ENCODE measurements at regions of chr19 and their contacts with region 1.

Region 1: GRCh38 chr19:1383311-1384084 is at the start of gene NDUFS7:
- DNase-seq: peak; percentile 89
- H3K4me3 ChIP-seq: peak within 1 kb of the TSS; percentile 69 to 84 (median 73)
- H3K27ac ChIP-seq: peak within 1 kb of the TSS; percentile 18
- H3K4me1 ChIP-seq: peaks cover 7% of the 10 kb centered on the region
- H3K27me3 ChIP-seq: no peaks in the 10 kb centered on the region
- CTCF ChIP-seq: peak in 1 of 2 donors; percentile 21
- POLR2A ChIP-seq: no peak
- total RNA-seq, gene NDUFS7: 95.8 and 101 TPM in 2 replicates

Region 2: DNA sequence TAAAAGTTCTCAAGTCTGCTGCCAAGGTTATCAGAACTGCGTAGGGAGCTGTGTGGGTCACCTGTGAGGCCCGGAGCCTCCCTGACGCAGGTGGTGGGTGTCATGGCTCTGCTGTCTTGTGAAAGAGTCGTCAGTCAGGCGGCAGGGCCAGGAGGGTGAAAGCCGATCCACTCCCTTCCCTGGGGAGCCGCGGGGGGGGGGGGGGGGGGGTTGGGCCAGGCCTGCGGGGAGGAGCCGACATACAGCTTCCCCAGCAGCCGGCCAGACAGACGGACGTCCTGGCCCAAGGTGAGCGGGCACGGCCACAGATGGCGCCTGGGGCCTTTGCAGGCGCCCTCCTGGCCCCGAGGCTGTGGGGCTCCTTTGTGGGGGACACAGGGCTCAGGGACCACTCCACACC is 221.8 kb before region 1 on chr19:
- CTCF ChIA-PET with region 1: no interaction called
- POLR2A ChIA-PET with region 1: no interaction called
- dilution Hi-C with region 1: no loop called
- intact Hi-C with region 1: no loop called
- DNase-seq: no peak
- H3K4me3 ChIP-seq: no peak overlapping the region
- H3K27ac ChIP-seq: no peak overlapping the region
- H3K4me1 ChIP-seq: no peaks in the 10 kb centered on the region
- H3K27me3 ChIP-seq: no peaks in the 10 kb centered on the region
- CTCF ChIP-seq: no peak
- POLR2A ChIP-seq: no peak

Region 3: DNA sequence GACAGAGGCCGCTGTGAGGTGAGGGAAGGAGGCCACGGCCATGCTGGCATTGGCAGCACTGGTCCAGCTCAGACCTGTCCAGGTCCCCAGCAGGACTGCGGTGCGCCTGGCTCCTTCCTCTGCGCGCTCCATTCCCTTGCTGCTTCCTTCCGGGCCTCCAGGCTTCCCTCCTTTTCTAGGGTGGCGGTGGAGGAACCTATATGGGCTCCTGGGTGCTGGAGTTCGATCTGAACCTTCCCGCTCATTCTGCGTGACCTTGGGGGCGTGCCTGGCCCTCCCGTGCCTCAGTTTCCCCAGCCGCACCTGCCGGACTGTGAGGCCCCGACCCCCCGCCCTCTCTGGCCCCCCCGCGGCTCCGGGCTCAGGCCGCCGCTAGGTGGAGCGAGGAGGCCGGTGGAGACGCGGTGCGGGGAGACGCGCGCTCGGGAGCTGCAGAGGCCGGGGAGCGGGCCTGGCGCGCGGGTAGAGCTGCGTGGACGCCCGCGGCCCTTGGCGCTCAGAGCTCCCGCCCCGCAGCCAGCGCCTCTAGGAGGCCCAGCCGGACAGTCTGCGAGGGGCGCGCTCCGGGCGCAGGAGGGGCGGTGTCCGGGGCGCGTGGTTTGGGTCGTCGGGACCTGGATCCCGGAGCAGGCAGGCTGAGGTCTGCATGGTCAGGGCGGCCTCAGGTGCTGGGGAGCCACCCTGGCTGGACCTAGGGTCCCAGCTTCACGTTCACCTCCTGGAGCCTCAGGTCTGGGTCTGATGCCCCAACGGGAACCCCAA is 67.8 kb before region 1 on chr19:
- CTCF ChIA-PET with region 1: interaction called, 6 read pairs
- POLR2A ChIA-PET with region 1: no interaction called
- dilution Hi-C with region 1: no loop called
- intact Hi-C with region 1: loop called (anchors 5 kb)
- DNase-seq: peak; percentile 31
- H3K4me3 ChIP-seq: no peak overlapping the region
- H3K27ac ChIP-seq: no peak overlapping the region
- H3K4me1 ChIP-seq: peaks cover 13% of the 10 kb centered on the region
- H3K27me3 ChIP-seq: peaks cover 17 to 18% of the 10 kb centered on the region in 2 experiments
- CTCF ChIP-seq: peak; percentile 41 to 64
- POLR2A ChIP-seq: no peak

Region 4: DNA sequence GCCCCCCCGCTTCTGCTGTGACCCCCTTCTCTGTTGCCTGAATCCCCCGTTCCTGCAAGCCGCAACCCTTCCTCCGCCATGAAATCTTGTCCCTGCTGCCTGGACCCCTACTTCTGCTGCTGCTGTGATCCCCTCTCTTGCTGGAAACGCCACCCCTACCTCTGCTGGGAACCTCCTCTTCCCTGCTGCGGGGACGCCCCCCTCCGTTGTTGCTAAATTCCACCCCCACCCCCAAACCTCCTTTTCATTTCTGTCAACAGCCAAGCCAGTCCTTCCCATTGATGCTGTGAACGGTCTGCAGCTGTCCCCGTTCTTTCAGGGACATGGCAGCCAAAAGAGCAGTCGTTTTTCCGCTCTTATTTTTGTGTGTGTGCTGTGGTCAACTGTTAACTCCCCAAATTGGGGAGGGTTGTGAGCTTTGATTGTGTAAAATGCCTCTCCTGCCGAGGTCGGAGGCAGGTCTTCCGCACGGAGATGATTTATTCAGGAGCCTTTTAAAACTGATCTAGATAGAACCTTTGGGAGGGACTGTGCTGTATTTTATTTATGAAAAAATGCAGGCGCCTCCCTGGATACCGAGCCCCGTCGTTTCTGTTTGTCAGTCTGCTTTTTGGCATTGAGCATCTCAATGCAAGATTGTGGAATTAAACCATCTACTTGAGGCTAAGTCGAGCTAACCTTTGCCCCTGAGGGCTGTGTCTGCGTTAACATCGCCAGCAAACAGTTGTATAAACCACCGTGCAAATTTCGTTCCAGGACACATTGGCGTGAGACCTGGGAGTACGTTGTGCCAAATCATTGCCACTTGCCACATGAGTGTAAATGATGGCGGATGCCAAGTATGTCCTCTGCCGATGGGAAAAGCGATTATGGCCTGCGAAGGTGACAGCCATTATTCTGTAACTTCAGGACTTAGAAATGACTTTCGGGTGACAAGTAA is 27.7 kb before region 1 on chr19:
- CTCF ChIA-PET with region 1: interaction called, 3 read pairs
- POLR2A ChIA-PET with region 1: interaction called, 6 read pairs
- dilution Hi-C with region 1: no loop called
- intact Hi-C with region 1: loop called (anchors 2 kb)
- DNase-seq: peak; percentile 30
- H3K4me3 ChIP-seq: peak overlapping the region; percentile 55 to 95 (median 78)
- H3K27ac ChIP-seq: no peak overlapping the region
- H3K4me1 ChIP-seq: peaks cover 16% of the 10 kb centered on the region
- H3K27me3 ChIP-seq: no peaks in the 10 kb centered on the region
- CTCF ChIP-seq: no peak
- POLR2A ChIP-seq: no peak

Region 5: GRCh38 chr19:1401138-1401888 is 17.8 kb after region 1 on chr19 and contains the start of gene GAMT:
- CTCF ChIA-PET with region 1: no interaction called
- POLR2A ChIA-PET with region 1: no interaction called
- dilution Hi-C with region 1: no loop called
- intact Hi-C with region 1: loop called (anchors 1 kb)
- DNase-seq: peak; percentile 48
- H3K4me3 ChIP-seq: peak within 1 kb of the TSS; percentile 47 to 70 (median 56)
- H3K27ac ChIP-seq: no peak within 1 kb of the TSS
- H3K4me1 ChIP-seq: peaks cover 12% of the 10 kb centered on the region
- H3K27me3 ChIP-seq: no peaks in the 10 kb centered on the region
- CTCF ChIP-seq: peak; percentile 27 to 48
- POLR2A ChIP-seq: no peak
- total RNA-seq, gene GAMT: 20.0 and 22.1 TPM in 2 replicates

Region 6: DNA sequence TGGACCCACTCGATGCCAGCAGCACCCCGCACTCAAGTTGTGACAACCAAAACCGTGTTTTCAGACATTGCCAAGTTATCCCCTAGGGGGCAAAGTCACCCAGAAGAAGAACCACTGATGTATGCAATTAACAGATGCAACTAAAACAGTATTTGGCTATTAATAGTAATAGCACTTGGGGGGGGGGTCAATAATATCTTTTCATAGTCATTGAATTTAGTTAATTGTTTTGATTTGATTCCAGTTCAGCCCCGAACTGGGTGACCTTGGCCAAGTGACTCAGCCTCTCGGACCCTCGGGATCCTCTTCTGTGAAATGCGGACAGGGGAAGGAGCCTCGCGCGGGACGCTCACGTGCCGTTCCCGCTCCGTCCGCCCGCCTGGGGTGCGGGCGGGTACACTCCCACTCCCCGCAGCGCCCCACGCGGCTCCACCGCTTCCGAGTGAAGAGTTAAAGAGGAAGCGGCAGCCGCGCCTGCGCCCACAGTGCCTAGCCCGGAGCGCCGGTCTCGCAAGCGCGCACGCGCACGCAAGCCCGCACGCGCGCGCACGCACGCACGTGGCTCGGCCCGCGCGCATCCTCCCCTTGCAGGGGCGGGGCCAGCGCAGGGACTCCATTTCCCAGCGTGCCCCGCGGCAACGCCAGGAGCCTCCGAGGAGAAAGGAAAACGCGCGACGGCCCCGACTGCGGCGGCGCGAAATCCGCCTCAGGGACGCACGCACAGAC is 23.4 kb after region 1 on chr19:
- CTCF ChIA-PET with region 1: no interaction called
- POLR2A ChIA-PET with region 1: no interaction called
- dilution Hi-C with region 1: no loop called
- intact Hi-C with region 1: loop called (anchors 1 kb)
- DNase-seq: peak; percentile 99
- H3K4me3 ChIP-seq: peak overlapping the region; percentile 53 to 61 (median 57)
- H3K27ac ChIP-seq: peak overlapping the region; percentile 42
- H3K4me1 ChIP-seq: peaks cover 26% of the 10 kb centered on the region
- H3K27me3 ChIP-seq: no peaks in the 10 kb centered on the region
- CTCF ChIP-seq: peak in 1 of 2 donors; percentile 55
- POLR2A ChIP-seq: peak; percentile 81

Region 7: GRCh38 chr19:1489463-1490310 is 106.2 kb after region 1 on chr19:
- CTCF ChIA-PET with region 1: no interaction called
- POLR2A ChIA-PET with region 1: no interaction called
- dilution Hi-C with region 1: no loop called
- intact Hi-C with region 1: no loop called
- DNase-seq: no peak
- H3K4me3 ChIP-seq: peak overlapping the region; percentile 9 to 51 (median 11)
- H3K27ac ChIP-seq: no peak overlapping the region
- H3K4me1 ChIP-seq: peaks cover 10% of the 10 kb centered on the region
- H3K27me3 ChIP-seq: peaks cover 0 to 6% of the 10 kb centered on the region in 2 experiments
- CTCF ChIP-seq: no peak
- POLR2A ChIP-seq: peak; percentile 20